Right ventricle myocardium superior (tissue), 1 donor: ENCODE measurements at regions of chr19 and their contacts with region 1.

Region 1: GRCh38 chr19:58154679-58155648 is 4.4 kb upstream of the ZNF329 start:
- DNase-seq: peak; percentile 98
- ATAC-seq: peak; percentile 98

Region 2: DNA sequence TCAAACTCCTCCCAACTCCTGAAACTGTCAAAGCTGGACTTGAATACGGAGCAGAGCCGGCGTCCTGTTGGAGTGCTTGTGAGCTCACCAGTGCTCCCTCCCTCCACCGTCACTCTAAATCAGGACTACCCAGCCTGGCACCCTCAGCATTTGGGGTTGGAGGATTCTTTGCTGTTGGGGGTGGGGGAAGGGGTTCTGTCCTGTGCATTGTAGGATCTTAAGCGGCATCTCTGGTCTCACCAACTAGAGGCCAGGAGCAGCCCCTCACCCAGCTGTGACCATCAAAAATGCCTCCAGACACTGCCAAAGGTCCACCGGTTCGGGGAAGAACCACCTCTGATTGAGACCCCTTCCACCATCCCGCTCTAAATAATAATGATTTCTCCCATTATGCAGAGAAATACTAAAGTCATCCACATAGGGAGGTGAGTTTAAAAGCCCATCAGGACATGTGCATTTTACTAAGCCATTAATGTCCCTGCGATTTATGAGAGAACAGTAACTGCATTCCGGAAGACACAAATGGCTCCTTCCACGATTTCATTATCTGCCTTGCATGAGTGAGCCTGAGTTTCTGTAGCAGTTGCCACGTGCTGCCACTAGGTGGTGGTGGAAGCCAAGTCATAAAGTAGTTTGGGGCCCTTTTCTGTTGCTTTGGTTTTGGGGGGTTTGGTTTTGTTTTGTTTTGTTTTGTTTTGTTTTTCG is 1051.2 kb before region 1 on chr19:
- intact Hi-C with region 1: loop called (anchors 10 kb)
- DNase-seq: peak; percentile 64
- ATAC-seq: peak; percentile 71

Region 3: DNA sequence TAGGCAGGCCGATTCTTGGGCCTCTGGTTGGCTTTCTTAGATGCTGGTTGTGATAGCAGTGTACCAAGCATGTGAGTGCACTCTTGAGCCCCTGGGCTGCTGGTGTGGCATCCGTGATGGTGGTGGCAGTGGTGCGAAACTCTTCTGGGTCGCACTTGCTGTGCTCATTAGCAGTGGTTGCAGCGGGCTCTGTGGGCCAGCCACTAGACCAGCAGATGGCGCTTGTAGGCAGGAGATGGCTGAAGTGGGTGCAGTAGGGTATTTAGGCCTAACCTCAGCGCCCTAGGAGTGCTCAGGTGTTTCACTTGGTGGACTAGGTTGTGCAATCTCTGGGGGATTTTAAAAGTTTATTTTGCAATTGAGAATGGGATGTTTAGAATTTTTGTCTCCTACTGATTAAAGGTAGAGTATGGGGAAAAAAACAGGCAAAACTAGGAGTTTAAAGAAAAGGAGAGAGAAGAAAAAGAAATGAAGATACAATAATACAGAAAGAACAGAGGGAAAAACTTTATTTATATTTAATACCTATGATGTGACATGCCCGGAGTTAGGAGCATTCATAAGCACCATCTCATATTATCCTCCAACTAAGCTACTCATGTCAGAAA is 748.3 kb before region 1 on chr19:
- intact Hi-C with region 1: loop called (anchors 10 kb)
- DNase-seq: peak; percentile 69
- ATAC-seq: peak; percentile 64

Region 4: DNA sequence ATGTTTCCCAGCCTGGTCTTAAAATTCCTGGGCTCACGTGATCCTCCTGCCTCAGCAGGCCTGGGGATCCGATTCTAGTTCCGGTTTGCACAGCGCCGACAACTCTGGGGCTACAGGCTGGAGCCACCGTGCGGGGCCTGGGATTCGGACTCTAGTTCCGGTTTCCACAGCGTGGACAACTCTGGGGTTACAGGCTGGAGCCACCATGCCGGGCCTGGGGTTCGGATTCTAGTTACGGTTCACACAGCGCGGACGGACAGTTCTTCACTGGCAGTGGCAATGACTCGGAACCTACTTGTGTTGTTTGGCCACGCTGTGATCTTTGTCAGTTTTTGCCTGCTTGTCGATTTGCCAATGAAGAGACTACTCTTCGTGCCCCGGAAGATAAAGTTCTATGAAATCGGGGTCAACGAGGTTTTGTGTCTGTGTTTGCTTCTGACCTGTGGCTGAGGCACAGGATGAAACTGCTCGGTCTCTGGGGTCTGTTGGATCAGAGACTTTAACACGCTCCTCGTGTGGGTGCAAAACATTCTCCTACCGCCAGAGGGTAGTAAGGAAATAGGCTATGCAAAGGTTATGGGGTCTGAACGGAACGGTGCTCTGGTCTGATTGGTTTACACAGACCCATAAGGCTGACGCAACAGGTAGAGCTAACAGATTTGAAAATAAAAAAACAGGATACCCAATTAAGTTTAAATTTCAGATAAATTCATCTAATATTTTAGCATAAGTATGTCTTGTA is 133.3 kb before region 1 on chr19:
- intact Hi-C with region 1: loop called (anchors 2 kb)
- DNase-seq: no peak
- ATAC-seq: peak; percentile 96

Region 5: GRCh38 chr19:58134244-58134643 is 20.7 kb before region 1 on chr19:
- intact Hi-C with region 1: no loop called
- DNase-seq: no peak
- ATAC-seq: no peak

Region 6: GRCh38 chr19:58563034-58563573 is 408.1 kb after region 1 on chr19:
- intact Hi-C with region 1: no loop called
- DNase-seq: no peak
- ATAC-seq: no peak